ENCODE measurements at regions of chr16 and their contacts with region 1.

Region 1: DNA sequence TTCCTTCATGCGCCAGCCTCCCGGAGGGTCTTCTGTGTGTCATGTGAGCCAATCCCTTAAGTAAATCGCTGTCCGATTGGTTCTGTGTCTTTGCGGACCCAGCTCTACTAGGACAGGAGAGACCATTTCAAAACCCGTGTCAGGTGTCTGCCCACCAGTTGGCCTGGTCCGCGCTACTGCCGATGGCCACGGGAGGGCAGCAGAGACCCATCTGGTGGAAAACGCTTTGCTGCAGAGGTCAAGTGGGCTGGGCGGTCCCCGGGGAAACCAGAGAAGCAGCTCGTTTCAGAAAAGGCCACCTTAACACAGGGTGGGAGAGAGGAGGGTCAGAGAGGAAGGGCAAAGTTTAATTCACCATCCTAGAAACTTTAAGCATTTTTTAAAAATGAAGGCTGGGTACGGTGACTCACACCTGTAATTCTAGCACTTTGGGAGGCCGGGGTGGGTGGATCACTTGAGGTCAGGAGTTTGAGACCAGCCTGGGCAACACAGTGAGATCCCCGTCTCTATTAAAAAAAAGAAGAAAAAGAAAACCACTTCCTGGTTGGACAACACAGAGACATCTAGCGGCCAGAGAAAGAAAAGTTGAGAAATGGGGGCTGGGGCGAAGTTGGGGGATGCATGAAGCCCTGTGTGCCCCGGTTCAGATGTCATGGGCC is 2.8 kb upstream of the CIBAR2 start:
- DNase-seq: peak; percentile 95

Region 2: GRCh38 chr16:85027349-85027957 is 87.6 kb before region 1 on chr16 and contains the start of gene KIAA0513:
- intact Hi-C with region 1: no loop called
- DNase-seq: peak; percentile 98
- total RNA-seq, gene KIAA0513: 8.3 TPM

Region 3: GRCh38 chr16:85126705-85127419 is 11.8 kb after region 1 on chr16:
- intact Hi-C with region 1: no loop called
- DNase-seq: no peak

Region 4: GRCh38 chr16:85253084-85253941 is 138.3 kb after region 1 on chr16:
- intact Hi-C with region 1: loop called (anchors 5 kb)
- DNase-seq: peak; percentile 84